PC-3 (cell line): ENCODE measurements at regions of chr18 and their contacts with region 1.

Region 1: GRCh38 chr18:62957885-62958472 is 242.6 kb downstream of the PHLPP1 start:
- DNase-seq: peak; percentile 68
- ATAC-seq: peak; percentile 45
- H3K4me3 ChIP-seq: no peak overlapping the region
- H3K27ac ChIP-seq: no peak overlapping the region
- H3K4me1 ChIP-seq: peaks cover 23% of the 10 kb centered on the region
- H3K27me3 ChIP-seq: no peaks in the 10 kb centered on the region
- CTCF ChIP-seq: peak; percentile 61

Region 2: GRCh38 chr18:62584241-62585120 is 373.5 kb before region 1 on chr18:
- CTCF ChIA-PET with region 1: no interaction called
- POLR2A ChIA-PET with region 1: no interaction called
- intact Hi-C with region 1: loop called (anchors 10 kb)
- DNase-seq: peak; percentile 90
- ATAC-seq: peak; percentile 83
- H3K4me3 ChIP-seq: no peak overlapping the region
- H3K27ac ChIP-seq: no peak overlapping the region
- H3K4me1 ChIP-seq: peaks cover 4% of the 10 kb centered on the region
- H3K27me3 ChIP-seq: no peaks in the 10 kb centered on the region
- CTCF ChIP-seq: peak; percentile 97

Region 3: GRCh38 chr18:62767321-62767720 is 190.7 kb before region 1 on chr18:
- CTCF ChIA-PET with region 1: no interaction called
- POLR2A ChIA-PET with region 1: no interaction called
- intact Hi-C with region 1: no loop called
- DNase-seq: peak; percentile 23
- ATAC-seq: no peak
- H3K4me3 ChIP-seq: no peak overlapping the region
- H3K27ac ChIP-seq: peak overlapping the region; percentile 84
- H3K4me1 ChIP-seq: peaks cover 44% of the 10 kb centered on the region
- H3K27me3 ChIP-seq: no peaks in the 10 kb centered on the region
- CTCF ChIP-seq: no peak

Region 4: DNA sequence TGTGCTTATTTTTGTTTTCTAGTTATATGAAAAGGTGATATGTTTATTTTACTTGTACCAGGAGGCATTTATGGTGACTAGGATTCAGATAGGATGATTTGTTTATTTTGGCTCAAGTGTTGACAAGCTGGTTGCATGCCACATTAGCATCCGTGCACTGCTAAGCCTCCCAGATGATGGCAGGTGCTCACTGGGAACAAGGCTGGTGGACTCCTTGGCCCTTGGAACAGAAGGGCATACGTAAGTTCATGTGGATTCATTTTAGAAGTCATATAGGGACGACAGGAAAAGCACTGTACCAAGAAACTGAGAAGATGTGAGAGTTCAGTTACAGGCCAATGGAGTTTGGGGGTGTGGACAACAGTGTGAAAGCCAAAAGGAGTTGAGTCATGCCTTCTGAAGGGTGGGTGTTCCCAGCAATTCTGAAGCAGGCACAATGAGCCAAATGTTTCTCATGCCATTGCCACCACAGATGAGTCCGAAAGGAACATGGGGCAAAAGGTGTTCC is 76.4 kb before region 1 on chr18:
- CTCF ChIA-PET with region 1: no interaction called
- POLR2A ChIA-PET with region 1: no interaction called
- intact Hi-C with region 1: loop called (anchors 5 kb)
- DNase-seq: peak; percentile 92
- ATAC-seq: peak; percentile 88
- H3K4me3 ChIP-seq: no peak overlapping the region
- H3K27ac ChIP-seq: peak overlapping the region; percentile 44
- H3K4me1 ChIP-seq: peaks cover 44% of the 10 kb centered on the region
- H3K27me3 ChIP-seq: no peaks in the 10 kb centered on the region
- CTCF ChIP-seq: no peak

Region 5: DNA sequence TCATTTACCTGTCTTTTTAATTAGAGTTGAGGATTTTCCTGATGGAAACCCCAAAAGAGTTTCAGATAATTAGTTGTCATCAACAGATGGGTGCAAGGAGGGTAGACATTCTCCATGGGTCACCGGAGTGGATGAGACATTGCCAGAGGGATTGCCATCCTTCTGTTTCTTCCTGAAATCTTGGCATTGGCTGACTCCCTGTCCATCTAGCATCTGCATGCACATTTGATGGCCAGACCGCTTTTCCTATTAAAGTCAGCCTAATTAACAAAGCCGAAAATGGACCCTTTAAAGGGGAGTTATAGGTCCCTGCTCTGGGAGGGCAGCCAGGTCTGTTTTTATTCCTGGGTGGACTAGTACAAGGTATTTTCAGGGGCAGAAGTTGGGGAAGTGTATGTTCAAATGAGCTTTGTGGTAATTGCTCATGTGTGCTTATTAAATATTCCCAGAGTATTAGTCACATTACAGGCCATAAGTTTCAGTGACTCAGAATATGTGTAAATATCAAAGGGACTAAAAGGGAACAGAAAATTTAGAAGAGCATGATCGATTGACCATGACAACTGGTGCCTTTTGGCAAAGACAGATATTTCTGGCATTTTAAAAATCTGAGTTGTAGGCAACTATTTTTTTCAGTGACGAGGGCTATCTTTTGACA is 32.8 kb before region 1 on chr18:
- CTCF ChIA-PET with region 1: no interaction called
- POLR2A ChIA-PET with region 1: interaction called, 10 read pairs
- intact Hi-C with region 1: no loop called
- DNase-seq: peak; percentile 88
- ATAC-seq: peak; percentile 95
- H3K4me3 ChIP-seq: peak overlapping the region; percentile 41; the same call in 1 of the 2 replicates
- H3K27ac ChIP-seq: peak overlapping the region; percentile 84
- H3K4me1 ChIP-seq: peaks cover 34% of the 10 kb centered on the region
- H3K27me3 ChIP-seq: no peaks in the 10 kb centered on the region
- CTCF ChIP-seq: no peak

Region 6: DNA sequence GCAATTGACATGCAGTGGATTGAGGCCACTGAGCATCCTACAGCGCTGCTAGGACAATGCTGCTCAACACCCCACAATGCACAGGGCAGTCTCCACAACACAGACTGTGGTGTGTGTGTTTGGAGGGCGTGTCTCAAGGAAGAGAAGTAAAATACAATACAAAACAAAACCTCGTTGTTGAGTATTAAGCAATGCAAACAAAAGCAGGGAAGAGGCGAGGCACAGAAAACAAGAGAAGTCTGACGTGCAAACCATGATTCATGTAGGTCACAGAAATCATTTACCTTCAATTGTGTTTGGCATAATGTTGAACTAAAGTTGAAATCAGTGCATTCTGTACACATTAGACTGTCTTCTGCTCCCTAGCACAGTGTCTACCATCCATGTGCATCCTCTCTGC is 18.2 kb after region 1 on chr18:
- CTCF ChIA-PET with region 1: interaction called, 3 read pairs
- POLR2A ChIA-PET with region 1: no interaction called
- intact Hi-C with region 1: loop called (anchors 2 kb)
- DNase-seq: peak; percentile 84
- ATAC-seq: peak; percentile 89
- H3K4me3 ChIP-seq: no peak overlapping the region
- H3K27ac ChIP-seq: peak overlapping the region; percentile 89
- H3K4me1 ChIP-seq: peaks cover 31% of the 10 kb centered on the region
- H3K27me3 ChIP-seq: no peaks in the 10 kb centered on the region
- CTCF ChIP-seq: no peak